Mammary epithelial cell (primary cell): ENCODE measurements at regions of chr20 and their contacts with region 1.

Region 1: DNA sequence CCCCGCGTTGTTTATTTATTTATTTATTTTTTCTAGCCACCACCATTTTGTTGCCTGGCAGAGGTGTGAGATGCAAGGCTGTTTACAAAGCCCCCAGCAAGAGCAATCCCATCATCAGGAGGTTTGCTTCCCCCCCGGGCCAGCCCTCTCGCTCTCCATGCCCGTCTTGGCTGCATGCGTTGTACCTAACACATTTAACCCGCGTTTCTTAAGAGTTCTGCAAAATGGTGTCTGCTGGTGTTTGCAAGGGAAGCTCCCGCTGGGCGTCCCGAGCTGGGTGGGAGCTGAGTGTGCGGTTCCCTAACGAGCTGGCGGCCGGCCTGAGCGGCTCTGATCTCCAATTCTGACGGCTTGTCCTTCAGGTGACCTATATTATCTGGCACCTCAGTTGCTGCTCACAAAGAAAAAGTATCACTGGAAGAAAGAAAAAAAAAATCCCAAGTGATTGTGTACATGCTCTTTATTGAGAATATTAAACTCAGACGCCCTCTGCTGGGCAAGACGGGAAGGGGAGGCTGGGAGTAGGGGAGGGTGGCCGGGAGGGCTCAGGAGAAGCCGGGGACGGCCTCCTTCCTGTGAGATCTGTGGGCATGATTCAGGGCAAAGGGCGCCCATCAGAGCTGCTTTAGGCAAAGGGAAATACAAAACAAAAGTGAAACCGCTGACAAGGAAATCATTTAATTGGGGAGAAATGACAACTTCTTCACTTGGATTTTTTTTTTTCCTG is 154.8 kb downstream of the BCAS1 start:
- DNase-seq: peak; percentile 91
- H3K4me3 ChIP-seq: peak overlapping the region; percentile 42 to 50 (median 48)
- H3K27ac ChIP-seq: peak overlapping the region; percentile 76
- H3K4me1 ChIP-seq: peaks cover 46% of the 10 kb centered on the region
- H3K27me3 ChIP-seq: no peaks in the 10 kb centered on the region
- CTCF ChIP-seq: peak; percentile 82 to 86

Region 2: GRCh38 chr20:53594068-53595017 is 321.3 kb before region 1 on chr20:
- CTCF ChIA-PET with region 1: no interaction called
- dilution Hi-C with region 1: no loop called
- in situ Hi-C with region 1: no loop called
- intact Hi-C with region 1: loop called (anchors 5 kb)
- DNase-seq: peak; percentile 85
- H3K4me3 ChIP-seq: peak overlapping the region; percentile 67 to 85 (median 83)
- H3K27ac ChIP-seq: peak overlapping the region; percentile 81
- H3K4me1 ChIP-seq: peaks cover 28% of the 10 kb centered on the region
- H3K27me3 ChIP-seq: no peaks in the 10 kb centered on the region
- CTCF ChIP-seq: no peak

Region 3: DNA sequence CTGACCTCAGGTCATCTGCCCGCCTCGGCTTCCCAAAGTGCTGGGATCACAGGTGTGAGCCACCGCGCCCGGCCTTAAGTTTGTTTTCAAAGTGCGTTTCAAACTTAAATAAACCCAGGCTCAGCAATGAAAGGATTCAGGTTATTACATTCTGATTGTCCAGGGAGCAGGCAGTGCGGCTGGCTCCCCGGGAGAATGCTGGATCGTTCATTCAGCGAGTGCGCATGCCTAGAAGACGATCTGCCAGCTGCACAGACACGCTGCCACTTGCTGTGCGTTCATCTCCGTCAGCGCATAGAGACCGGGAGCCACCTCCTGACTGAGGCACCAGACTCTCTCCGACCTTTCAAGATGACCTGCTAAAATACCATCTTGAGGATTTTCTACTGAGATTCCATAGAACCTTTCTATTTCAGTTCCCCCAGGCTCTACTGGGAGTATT is 158.1 kb before region 1 on chr20:
- CTCF ChIA-PET with region 1: no interaction called
- dilution Hi-C with region 1: loop called (anchors 25 kb)
- in situ Hi-C with region 1: loop called in 1 of 2 experiments (anchors 25 kb)
- intact Hi-C with region 1: loop called (anchors 5 kb)
- DNase-seq: peak; percentile 62
- H3K4me3 ChIP-seq: no peak overlapping the region
- H3K27ac ChIP-seq: no peak overlapping the region
- H3K4me1 ChIP-seq: peaks cover 15% of the 10 kb centered on the region
- H3K27me3 ChIP-seq: no peaks in the 10 kb centered on the region
- CTCF ChIP-seq: no peak